ENCODE measurements at regions of chr20 and their contacts with region 1.

Region 1: GRCh38 chr20:32972181-32973076 is 31.8 kb downstream of the SUN5 start:
- DNase-seq: peak; percentile 76
- H3K4me3 Mint-ChIP-seq: no peak overlapping the region
- H3K27ac Mint-ChIP-seq: peak overlapping the region; percentile 59
- H3K4me1 Mint-ChIP-seq: peaks cover 42% of the 10 kb centered on the region
- H3K27me3 Mint-ChIP-seq: no peaks in the 10 kb centered on the region

Region 2: DNA sequence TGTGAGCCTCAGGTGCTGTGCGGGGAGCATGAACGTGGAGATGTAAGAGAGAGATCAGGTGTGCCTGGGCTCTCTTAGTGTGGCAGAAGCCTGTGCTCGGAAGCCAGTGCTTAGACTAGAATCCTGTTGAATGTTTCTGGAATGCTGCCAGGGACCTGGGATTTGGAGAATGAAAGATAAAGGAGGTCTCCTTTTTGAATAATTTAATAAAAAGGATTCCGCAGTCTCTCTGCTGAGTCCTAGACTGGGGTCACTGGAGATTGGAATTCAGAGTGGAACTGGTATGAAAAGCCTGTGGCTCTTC is 132.5 kb before region 1 on chr20:
- intact Hi-C with region 1: loop called (anchors 10 kb)
- DNase-seq: no peak
- H3K4me3 Mint-ChIP-seq: no peak overlapping the region
- H3K27ac Mint-ChIP-seq: no peak overlapping the region
- H3K4me1 Mint-ChIP-seq: peaks cover 44% of the 10 kb centered on the region
- H3K27me3 Mint-ChIP-seq: no peaks in the 10 kb centered on the region

Region 3: GRCh38 chr20:32982617-32983458 is 10.4 kb after region 1 on chr20:
- intact Hi-C with region 1: no loop called
- DNase-seq: no peak
- H3K4me3 Mint-ChIP-seq: no peak overlapping the region
- H3K27ac Mint-ChIP-seq: no peak overlapping the region
- H3K4me1 Mint-ChIP-seq: no peaks in the 10 kb centered on the region
- H3K27me3 Mint-ChIP-seq: no peaks in the 10 kb centered on the region

Region 4: GRCh38 chr20:33005132-33005566 is 32.7 kb after region 1 on chr20:
- intact Hi-C with region 1: no loop called
- DNase-seq: peak; percentile 5
- H3K4me3 Mint-ChIP-seq: no peak overlapping the region
- H3K27ac Mint-ChIP-seq: no peak overlapping the region
- H3K4me1 Mint-ChIP-seq: no peaks in the 10 kb centered on the region
- H3K27me3 Mint-ChIP-seq: no peaks in the 10 kb centered on the region